Left colon (tissue), 2 donors: ENCODE measurements at regions of chr1 and their contacts with region 1.

Region 1: DNA sequence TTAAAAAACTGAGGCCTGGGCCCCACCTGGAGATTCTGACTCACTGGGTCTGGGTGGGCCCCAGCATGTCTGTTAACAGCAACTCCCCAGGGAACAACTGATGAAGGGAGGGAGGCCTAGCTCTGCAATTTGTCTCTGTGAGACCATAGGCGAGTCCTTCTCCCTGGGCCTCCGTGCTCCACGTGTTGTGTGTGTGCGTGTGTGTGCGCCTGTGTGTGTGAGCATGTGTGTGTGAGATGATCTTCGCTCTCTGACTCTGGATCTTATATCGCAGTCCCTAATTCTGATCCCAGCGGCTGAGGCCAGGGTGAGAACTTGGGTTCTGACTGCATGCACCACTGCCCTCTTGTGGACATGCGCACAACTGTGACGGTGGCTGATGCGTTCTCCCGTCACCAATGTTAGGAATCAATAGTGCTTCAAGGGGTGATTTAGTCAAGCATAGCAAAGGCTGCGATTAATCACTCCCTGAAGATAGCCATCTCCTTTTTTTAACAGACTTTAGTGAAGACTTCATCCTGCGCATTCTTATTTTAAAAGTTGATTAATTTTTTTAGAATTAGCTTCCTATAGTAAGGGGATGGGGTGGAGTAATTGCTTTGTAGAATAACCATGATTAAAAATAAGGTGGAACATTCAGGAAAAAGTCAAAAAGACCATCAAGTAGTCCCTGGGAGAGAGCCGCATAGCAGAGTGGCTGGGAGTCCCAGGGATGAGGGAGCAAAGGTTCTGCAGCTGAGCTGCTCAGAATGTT is 62.4 kb upstream of the USP24 start:
- DNase-seq: peak; percentile 70 to 88
- ATAC-seq: peak; percentile 84

Region 2: GRCh38 chr1:55140546-55140983 is 137.0 kb before region 1 on chr1:
- intact Hi-C with region 1: loop called (anchors 2 to 5 kb)
- DNase-seq: peak; percentile 61 to 69
- ATAC-seq: peak; percentile 96

Region 3: GRCh38 chr1:55337801-55338447 is 60.4 kb after region 1 on chr1:
- intact Hi-C with region 1: no loop called
- DNase-seq: peak in 1 of 2 donors; percentile 6
- ATAC-seq: peak; percentile 90